Activated CD8-positive, alpha-beta T cell treated with anti-CD3 and anti-CD28 coated beads, Interleukin-2, amount 10 ng/mL, durations not matched to agents 7 days and 5 days (primary cell): ENCODE measurements at regions of chr17 and their contacts with region 1.

Region 1: DNA sequence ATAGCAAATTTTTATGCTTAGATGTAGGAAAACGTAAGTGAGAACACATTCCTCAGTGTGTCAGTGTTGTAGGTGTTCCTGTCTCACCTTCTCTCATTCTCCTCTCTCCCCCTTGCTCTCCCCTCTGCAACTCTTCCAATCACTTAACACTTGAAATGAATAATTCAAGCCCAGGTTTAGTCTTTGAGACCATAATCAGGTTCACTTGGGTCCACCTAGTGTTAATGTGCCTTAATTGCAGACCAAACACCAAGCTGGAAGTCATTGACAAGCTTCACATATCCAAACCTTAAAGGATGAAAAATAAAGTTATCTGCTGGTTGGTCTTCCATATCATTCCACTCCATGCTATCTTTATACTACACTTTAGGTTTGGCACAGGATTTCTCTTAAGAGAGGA is 37.0 kb downstream of the STXBP4 start:
- DNase-seq: peak; percentile 29
- ATAC-seq: peak; percentile 55
- H3K4me3 Mint-ChIP-seq: no peak overlapping the region
- H3K27ac Mint-ChIP-seq: no peak overlapping the region
- H3K4me1 Mint-ChIP-seq: peaks cover 2% of the 10 kb centered on the region
- H3K27me3 Mint-ChIP-seq: no peaks in the 10 kb centered on the region

Region 2: GRCh38 chr17:55037828-55038227 is 32.3 kb after region 1 on chr17:
- CTCF ChIA-PET with region 1: no interaction called
- POLR2A ChIA-PET with region 1: no interaction called
- DNase-seq: no peak
- ATAC-seq: no peak
- H3K4me3 Mint-ChIP-seq: no peak overlapping the region
- H3K27ac Mint-ChIP-seq: no peak overlapping the region
- H3K4me1 Mint-ChIP-seq: peaks cover 2% of the 10 kb centered on the region
- H3K27me3 Mint-ChIP-seq: no peaks in the 10 kb centered on the region

Region 3: DNA sequence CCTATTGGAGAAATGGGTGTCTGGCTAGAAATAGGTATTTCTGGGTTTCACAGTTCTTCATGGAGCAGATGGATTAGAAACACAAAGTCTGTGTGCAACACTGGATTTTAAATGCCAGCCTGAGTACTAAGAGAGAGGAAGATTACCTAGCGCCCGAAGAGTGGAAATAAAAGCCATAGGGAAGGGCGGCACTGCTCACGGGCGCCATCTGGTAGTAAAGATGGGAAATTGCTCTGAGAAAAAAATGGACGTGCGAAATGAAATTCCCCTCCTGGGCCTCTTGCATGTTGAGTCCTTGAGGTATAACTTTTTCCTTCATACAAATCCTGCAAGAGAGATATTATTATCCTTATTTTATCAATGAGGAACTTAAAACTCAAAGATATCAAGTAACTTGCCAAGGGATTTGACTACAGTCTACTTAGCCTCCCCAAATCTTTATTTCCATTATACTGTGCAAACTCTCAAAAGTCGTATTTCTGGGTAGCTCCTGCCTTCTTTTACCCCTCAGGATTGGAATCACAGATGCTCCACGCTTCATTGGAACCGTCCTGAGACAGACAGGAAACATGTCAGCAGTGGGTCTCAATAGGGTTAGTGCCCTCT is 343.3 kb after region 1 on chr17:
- CTCF ChIA-PET with region 1: interaction called, 14 read pairs
- POLR2A ChIA-PET with region 1: no interaction called
- DNase-seq: peak; percentile 62
- ATAC-seq: no peak
- H3K4me3 Mint-ChIP-seq: no peak overlapping the region
- H3K27ac Mint-ChIP-seq: no peak overlapping the region
- H3K4me1 Mint-ChIP-seq: peaks cover 65% of the 10 kb centered on the region
- H3K27me3 Mint-ChIP-seq: no peaks in the 10 kb centered on the region

Region 4: DNA sequence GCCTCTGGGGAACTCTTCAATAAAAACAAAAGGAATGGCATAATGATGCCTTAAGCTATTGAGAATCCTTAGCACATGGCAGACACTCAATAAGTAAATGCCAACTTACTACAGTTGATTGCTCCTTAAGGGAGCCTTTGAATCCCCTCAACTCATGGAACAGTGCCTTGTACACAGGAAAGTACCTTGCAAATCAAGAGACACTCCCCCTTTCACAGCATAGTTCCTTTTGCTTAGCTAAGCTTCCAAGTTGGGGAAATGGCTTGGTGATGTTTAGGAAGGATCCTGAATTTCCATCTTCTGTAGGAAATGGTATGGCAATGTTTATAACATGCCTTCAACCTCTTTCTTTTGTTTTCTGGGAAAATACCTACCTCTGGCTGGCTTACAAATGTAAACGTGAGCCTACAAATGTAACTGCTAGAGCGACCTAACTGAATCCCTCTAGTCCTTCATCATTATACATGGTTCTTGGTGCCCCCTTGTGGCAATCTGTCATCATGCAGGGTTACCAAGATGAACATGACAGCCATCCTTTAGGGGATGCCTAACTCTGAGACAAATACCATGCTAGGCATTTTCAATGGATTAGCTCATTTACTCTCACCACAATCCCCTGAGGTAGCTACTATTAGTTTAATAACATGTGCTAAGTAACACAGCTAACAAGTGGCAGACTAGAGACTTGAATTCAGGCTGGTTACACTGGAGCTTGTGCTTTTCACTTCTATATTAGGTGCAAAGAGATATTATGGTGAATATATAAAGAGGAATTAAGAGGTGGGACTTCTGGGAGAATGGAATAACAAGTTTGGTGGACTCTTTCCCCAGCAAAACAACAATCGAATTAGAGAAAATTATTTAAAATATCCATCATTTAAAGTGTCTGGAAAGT is 351.2 kb after region 1 on chr17:
- CTCF ChIA-PET with region 1: interaction called, 14 read pairs
- POLR2A ChIA-PET with region 1: no interaction called
- DNase-seq: peak; percentile 87
- ATAC-seq: peak; percentile 88
- H3K4me3 Mint-ChIP-seq: no peak overlapping the region
- H3K27ac Mint-ChIP-seq: no peak overlapping the region
- H3K4me1 Mint-ChIP-seq: peaks cover 11% of the 10 kb centered on the region
- H3K27me3 Mint-ChIP-seq: peaks cover 27% of the 10 kb centered on the region